Activated B cell treated with CpG ODN at 0.5 μM for 24 hours (primary cell): ENCODE measurements at regions of chr14 and their contacts with region 1.

Region 1: DNA sequence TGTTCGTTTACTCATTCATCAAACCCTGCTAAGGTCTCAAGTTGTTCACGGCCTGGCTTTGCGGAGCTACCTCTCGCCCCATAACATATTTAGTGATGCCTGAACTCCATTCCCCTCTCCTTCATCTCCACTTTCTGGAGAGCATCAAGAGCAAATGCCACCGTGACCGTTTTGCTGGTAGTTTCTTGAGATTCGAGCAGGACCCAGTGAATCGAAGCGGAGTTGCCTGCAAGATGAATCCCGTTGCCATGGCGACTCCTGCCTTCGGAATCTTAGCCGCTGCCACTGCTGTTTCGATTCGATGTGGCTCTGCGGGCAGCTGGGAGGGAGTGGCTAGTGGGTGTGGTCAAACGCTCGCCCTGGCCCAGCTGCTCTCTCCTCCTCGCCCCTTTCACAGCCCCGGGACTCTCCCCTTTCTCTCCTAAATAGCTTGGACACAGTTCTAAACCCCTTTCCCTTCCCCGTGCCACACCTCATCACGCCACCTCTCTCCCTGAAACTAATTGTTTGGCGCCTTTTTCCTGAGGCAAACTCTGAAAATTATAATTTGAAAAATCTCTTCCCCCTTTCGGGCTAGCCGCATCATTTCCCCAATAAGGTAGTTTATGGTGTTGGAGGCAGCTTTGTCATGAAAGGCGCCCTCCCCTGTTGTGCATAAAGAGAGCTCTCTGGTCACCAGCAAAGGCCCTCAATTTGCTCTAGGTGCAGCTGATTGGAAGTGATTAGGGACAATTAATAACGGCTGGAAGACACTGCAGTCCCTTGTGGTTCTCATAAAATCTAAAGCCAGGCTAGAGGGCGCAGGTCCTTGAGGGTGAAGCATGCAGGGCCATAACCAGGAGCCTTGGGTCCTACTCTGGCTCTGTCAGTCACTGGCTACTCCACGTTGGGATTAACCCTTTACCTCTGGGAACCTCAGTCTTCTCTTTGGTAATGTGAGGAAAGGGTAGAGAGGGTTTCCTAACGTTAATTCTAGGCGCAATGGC is 1.6 kb downstream of the DAAM1 start:
- DNase-seq: peak; percentile 60
- ATAC-seq: peak; percentile 10
- H3K4me3 Mint-ChIP-seq: peak overlapping the region; percentile 93
- H3K27ac Mint-ChIP-seq: peak overlapping the region; percentile 87
- H3K4me1 Mint-ChIP-seq: peaks cover 21% of the 10 kb centered on the region
- H3K27me3 Mint-ChIP-seq: peaks cover 5% of the 10 kb centered on the region
- CTCF ChIP-seq: no peak

Region 2: GRCh38 chr14:58199726-58200479 is 990.2 kb before region 1 on chr14 and contains the start of gene ACTR10:
- CTCF ChIA-PET with region 1: no interaction called
- POLR2A ChIA-PET with region 1: no interaction called
- intact Hi-C with region 1: loop called (anchors 1 kb)
- DNase-seq: peak; percentile 93
- ATAC-seq: peak; percentile 88
- H3K4me3 Mint-ChIP-seq: peak within 1 kb of the TSS; percentile 94
- H3K27ac Mint-ChIP-seq: peak within 1 kb of the TSS; percentile 93
- H3K4me1 Mint-ChIP-seq: peaks cover 28% of the 10 kb centered on the region
- H3K27me3 Mint-ChIP-seq: no peaks in the 10 kb centered on the region
- CTCF ChIP-seq: no peak
- total RNA-seq, gene ACTR10: 36.5 and 40.5 TPM in 2 replicates

Region 3: DNA sequence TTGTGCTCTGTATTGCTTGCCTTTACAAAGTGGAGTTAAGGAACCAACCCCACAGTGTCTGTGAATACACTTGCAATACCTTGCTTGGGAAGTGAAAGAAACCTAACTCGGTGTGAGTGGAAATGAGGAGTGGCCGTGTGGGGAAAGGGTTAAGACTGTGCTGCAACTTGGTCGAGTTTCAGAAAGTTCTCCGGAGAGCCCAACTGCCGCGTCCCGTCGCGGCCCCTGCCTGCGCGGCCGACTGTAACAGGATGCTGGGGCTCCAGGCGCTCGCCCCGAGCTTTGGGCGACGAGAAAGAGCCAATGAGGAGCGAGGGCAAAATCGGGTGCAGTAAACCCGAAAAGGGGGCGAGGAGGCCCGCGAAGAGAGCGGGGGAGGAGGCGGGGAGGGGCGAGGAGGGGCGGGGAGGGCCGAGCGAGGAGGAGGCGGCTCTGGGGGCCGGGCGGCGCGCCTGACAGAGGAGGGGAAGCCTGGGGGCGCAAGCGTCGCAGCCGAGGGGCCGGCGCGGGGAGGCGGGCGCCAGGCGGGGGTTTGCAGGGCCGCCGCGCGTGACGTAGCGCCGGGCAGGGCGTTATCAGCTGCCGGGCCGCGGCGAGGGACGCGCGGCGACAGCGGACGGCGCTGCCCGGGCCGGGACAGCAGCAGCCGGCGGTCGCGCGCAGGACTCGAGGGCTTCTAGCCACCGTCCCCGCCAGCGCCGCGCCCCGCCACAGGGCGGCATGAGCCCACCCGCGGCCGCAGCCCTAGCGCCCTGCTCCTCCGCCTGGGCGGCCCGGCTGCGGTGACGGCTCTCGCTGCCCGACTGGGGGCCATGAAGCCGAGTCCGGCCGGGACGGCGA is 552.5 kb before region 1 on chr14 and contains the start of gene DACT1:
- CTCF ChIA-PET with region 1: no interaction called
- POLR2A ChIA-PET with region 1: no interaction called
- intact Hi-C with region 1: loop called (anchors 5 kb)
- DNase-seq: peak; percentile 52
- ATAC-seq: peak; percentile 80
- H3K4me3 Mint-ChIP-seq: peak within 1 kb of the TSS; percentile 94
- H3K27ac Mint-ChIP-seq: peak within 1 kb of the TSS; percentile 90
- H3K4me1 Mint-ChIP-seq: peaks cover 46% of the 10 kb centered on the region
- H3K27me3 Mint-ChIP-seq: peaks cover 17% of the 10 kb centered on the region
- CTCF ChIP-seq: no peak
- total RNA-seq, gene DACT1: 3.0 and 3.5 TPM in 2 replicates

Region 4: GRCh38 chr14:59175404-59175803 is 14.7 kb before region 1 on chr14:
- CTCF ChIA-PET with region 1: no interaction called
- POLR2A ChIA-PET with region 1: interaction called, 6 read pairs
- intact Hi-C with region 1: loop called (anchors 1 kb)
- DNase-seq: no peak
- ATAC-seq: peak; percentile 99
- H3K4me3 Mint-ChIP-seq: peak overlapping the region; percentile 42
- H3K27ac Mint-ChIP-seq: peak overlapping the region; percentile 24
- H3K4me1 Mint-ChIP-seq: peaks cover 13% of the 10 kb centered on the region
- H3K27me3 Mint-ChIP-seq: peaks cover 5% of the 10 kb centered on the region
- CTCF ChIP-seq: no peak

Region 5: GRCh38 chr14:59358105-59358504 is 168.0 kb after region 1 on chr14:
- CTCF ChIA-PET with region 1: no interaction called
- POLR2A ChIA-PET with region 1: interaction called, 5 read pairs
- intact Hi-C with region 1: loop called (anchors 2 kb)
- DNase-seq: no peak
- ATAC-seq: no peak
- H3K4me3 Mint-ChIP-seq: no peak overlapping the region
- H3K27ac Mint-ChIP-seq: no peak overlapping the region
- H3K4me1 Mint-ChIP-seq: peaks cover 83% of the 10 kb centered on the region
- H3K27me3 Mint-ChIP-seq: no peaks in the 10 kb centered on the region
- CTCF ChIP-seq: no peak

Region 6: GRCh38 chr14:59657769-59658168 is 467.7 kb after region 1 on chr14:
- CTCF ChIA-PET with region 1: no interaction called
- POLR2A ChIA-PET with region 1: no interaction called
- intact Hi-C with region 1: no loop called
- DNase-seq: no peak
- ATAC-seq: no peak
- H3K4me3 Mint-ChIP-seq: no peak overlapping the region
- H3K27ac Mint-ChIP-seq: no peak overlapping the region
- H3K4me1 Mint-ChIP-seq: no peaks in the 10 kb centered on the region
- H3K27me3 Mint-ChIP-seq: no peaks in the 10 kb centered on the region
- CTCF ChIP-seq: no peak

Region 7: DNA sequence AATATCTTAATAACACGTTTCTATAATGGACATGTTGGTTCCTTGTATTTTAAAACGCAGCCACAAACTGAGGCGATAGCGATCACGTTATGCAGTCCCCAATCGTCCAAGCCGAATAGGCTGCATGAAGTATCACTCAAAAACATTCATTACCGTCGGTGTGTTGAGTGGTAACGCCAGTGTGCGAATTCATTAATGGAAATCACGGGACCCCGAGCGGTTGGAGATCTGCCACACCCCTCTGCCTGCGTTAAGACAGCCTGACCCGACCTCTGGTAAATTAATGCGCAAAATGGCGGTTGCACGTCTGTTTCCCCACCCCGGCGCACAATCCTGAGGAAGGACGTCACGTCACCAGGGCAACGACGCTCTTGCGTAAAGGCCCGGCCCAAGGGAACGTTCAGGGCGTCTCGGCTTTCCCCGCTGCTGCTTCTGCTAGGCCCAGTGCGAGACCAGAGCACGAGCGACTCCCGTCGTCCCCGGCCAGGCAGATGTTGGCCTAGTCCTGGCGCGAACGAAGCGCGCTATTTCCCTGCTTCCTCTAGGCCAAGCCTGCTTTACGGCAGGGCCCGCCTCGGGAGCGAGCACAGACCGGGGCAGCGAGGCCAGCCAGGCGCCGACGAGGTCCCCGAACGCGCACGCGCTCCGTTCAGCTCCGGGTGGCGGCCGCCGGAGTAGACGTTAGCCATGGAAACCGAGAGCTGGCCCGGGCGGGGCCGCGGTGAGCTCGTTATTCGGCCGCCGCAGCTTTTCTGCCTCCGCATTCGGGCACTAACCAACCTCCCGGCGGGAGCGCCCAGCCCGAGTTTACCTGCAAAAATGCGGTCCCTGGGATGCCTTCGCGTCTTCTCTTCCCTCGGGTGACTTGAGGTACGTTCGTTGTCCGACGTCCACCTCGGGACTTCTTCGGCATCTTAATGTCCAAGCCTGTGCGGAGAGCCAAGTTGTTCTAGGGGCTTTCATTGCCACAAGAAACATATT is 901.8 kb after region 1 on chr14 and contains the start of gene PCNX4:
- CTCF ChIA-PET with region 1: no interaction called
- POLR2A ChIA-PET with region 1: no interaction called
- intact Hi-C with region 1: loop called (anchors 2 kb)
- DNase-seq: peak; percentile 88
- ATAC-seq: peak; percentile 91
- H3K4me3 Mint-ChIP-seq: peak within 1 kb of the TSS; percentile 92
- H3K27ac Mint-ChIP-seq: peak within 1 kb of the TSS; percentile 96
- H3K4me1 Mint-ChIP-seq: peaks cover 37% of the 10 kb centered on the region
- H3K27me3 Mint-ChIP-seq: no peaks in the 10 kb centered on the region
- CTCF ChIP-seq: no peak
- total RNA-seq, gene PCNX4: 31.7 and 41.4 TPM in 2 replicates